Dendritic cell treated with granulocyte-macrophage colony-stimulating factor and Interleukin-4, amounts not matched to agents 40 ng/mL and 50 ng/mL, for 4 days (primary cell): ENCODE measurements at regions of chr14 and their contacts with region 1.

Region 1: GRCh38 chr14:35687335-35687939 is 121.7 kb downstream of the RALGAPA1 start:
- H3K4me3 Mint-ChIP-seq: no peak overlapping the region
- H3K27ac Mint-ChIP-seq: no peak overlapping the region
- H3K4me1 Mint-ChIP-seq: peaks cover 5% of the 10 kb centered on the region
- H3K27me3 Mint-ChIP-seq: no peaks in the 10 kb centered on the region

Region 2: GRCh38 chr14:35438910-35439713 is 248.3 kb before region 1 on chr14:
- intact Hi-C with region 1: loop called (anchors 5 kb)
- H3K4me3 Mint-ChIP-seq: no peak overlapping the region
- H3K27ac Mint-ChIP-seq: no peak overlapping the region
- H3K4me1 Mint-ChIP-seq: peaks cover 6% of the 10 kb centered on the region
- H3K27me3 Mint-ChIP-seq: no peaks in the 10 kb centered on the region

Region 3: GRCh38 chr14:35533357-35534207 is 153.9 kb before region 1 on chr14 and contains the start of gene INSM2:
- intact Hi-C with region 1: loop called (anchors 5 kb)
- H3K4me3 Mint-ChIP-seq: peak within 1 kb of the TSS; percentile 75
- H3K27ac Mint-ChIP-seq: no peak within 1 kb of the TSS
- H3K4me1 Mint-ChIP-seq: peaks cover 20% of the 10 kb centered on the region
- H3K27me3 Mint-ChIP-seq: peaks cover 78% of the 10 kb centered on the region